Lower leg skin (tissue), 4 donors: ENCODE measurements at regions of chr14 and their contacts with region 1.

Region 1: DNA sequence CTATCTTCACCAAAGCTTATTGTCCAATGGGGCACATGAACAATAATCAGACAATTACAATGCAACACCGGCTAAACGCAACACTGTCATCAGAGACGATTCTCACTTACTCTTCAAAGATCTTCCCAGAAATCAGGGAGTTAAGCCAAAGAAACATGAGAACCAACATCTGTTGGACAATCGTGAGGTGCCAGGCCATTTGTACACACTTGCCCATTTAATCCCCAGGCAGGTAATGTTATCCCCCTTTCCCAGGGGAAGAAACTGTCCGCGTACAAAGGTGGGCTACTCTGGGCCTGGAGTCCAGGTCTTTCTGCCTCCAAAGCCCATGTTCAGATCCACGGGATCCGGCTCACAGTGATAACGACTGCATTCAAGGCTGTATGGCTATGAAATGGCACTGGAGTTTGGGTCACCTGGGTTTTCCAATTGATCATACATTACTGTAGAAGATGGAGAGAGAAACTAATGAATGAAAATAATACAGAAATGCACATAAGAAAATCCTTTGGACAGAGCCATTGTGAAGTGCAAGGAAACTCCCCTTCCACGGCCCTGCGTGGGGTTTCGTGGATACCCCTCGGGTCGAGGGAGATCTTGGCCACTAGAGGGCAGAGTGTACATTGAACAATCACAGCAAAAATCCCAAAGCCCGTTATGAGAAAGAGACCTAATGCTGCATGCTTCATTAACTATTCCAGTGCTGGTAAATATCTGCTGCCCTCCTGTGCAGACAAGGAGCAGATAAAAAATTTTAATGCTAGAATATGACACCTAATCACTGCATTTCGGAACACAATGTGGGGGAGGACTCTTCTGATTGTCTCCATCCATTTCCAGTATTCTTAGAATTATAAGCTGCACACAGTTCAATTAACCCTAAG is 111.4 kb downstream of the EGLN3 start:
- DNase-seq: peak in 1 of 2 donors; percentile 45
- H3K4me3 ChIP-seq: no peak overlapping the region
- CTCF ChIP-seq: peak in 1 of 3 donors; percentile 66
- POLR2A ChIP-seq: no peak

Region 2: DNA sequence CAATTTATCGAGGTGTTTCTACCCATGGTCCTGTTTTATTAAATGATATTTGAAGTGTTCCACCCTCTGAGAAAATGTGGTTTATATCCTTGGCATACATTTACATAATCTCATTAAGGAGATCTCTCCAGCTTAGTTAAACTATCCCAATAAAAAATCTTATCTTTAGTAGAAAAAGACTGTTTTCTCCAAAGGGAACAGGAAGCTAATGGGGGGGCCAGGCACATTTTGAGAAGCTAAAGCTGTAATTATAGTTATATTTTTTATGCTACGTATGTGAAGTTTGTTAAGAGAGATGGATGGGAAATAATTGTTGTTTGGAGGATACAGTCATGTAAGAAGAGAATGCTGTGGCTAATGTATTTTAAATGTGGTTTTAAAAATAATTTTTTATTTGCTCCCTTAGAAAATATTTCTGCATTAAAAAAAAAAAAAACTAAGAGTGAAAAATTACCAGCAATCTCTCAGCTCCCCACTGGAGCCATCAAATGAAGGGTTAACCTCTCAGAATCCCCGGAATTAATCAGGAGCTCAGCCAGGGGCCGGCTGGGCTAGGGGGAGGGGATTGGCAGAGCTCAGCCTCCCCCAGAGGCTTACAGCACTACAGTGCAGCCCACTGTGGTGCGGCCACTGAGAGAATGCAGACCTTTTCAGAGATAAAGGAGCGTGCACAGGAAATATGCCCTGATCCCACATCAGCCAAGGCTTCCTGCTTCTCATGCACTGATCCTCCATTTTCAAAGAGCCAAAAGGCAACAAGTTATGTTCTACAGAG is 74.4 kb before region 1 on chr14:
- intact Hi-C with region 1: no loop called
- DNase-seq: no peak
- H3K4me3 ChIP-seq: no peak overlapping the region
- CTCF ChIP-seq: no peak
- POLR2A ChIP-seq: no peak

Region 3: DNA sequence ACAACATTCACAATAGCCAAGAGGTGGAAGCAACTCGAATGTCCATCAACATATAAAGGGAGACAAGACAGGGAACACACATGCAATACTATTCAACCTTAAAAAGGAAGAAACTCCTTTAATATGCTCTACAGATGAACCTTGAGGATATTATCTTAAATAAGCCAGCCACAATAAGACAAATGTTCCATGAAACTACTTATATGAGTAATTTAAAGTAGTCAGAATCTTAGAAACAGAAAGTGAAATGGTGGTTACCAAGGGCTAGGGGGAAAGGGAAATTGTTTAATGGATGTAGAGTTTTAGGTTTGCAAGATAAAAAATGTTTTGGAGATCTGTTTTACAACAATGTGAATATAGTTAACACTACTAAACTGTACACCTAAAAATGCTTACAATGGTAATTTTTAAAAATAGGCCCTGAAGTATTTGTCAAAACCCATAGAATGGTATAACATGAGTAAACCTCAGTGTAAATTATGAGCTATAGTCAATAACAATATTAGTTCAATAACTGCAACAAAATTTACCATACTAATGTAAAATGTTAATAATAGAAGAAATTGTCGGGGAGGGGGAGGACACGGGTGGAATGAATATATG is 40.4 kb after region 1 on chr14:
- intact Hi-C with region 1: no loop called
- DNase-seq: no peak
- H3K4me3 ChIP-seq: no peak overlapping the region
- CTCF ChIP-seq: no peak
- POLR2A ChIP-seq: no peak

Region 4: GRCh38 chr14:33972583-33973081 is 133.2 kb after region 1 on chr14:
- intact Hi-C with region 1: no loop called
- DNase-seq: no peak
- H3K4me3 ChIP-seq: no peak overlapping the region
- CTCF ChIP-seq: no peak
- POLR2A ChIP-seq: no peak

Region 5: GRCh38 chr14:34098045-34098984 is 258.9 kb after region 1 on chr14:
- intact Hi-C with region 1: loop called (anchors 10 kb)
- DNase-seq: peak in 1 of 2 donors; percentile 41
- H3K4me3 ChIP-seq: no peak overlapping the region
- CTCF ChIP-seq: no peak
- POLR2A ChIP-seq: no peak

Region 6: DNA sequence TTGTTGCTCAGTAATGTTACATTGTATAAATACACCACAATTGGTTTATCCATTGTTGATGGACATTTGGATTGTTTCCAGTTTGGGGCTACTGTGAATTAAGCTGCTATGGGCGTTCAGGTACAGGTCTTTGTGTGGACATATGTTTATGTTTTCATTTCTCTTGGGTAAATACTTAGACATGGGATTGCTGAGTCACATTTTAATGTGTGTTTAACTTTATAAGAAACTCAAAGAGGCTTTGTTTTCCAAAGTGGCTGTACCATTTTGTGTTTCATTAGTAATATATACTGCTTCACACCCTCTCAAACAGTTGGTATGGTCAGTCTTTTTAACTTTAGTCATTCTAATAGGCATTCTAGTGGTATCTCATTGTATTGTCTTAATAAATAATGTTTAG is 397.6 kb after region 1 on chr14:
- intact Hi-C with region 1: no loop called
- DNase-seq: no peak
- H3K4me3 ChIP-seq: no peak overlapping the region
- CTCF ChIP-seq: no peak
- POLR2A ChIP-seq: no peak